ENCODE measurements at regions of chr15 and their contacts with region 1.

Region 1: GRCh38 chr15:96330450-96331145 is at the start of gene NR2F2:
- DNase-seq: peak; percentile 95
- ATAC-seq: peak; percentile 60
- H3K4me3 ChIP-seq: peak within 1 kb of the TSS; percentile 70 to 94 (median 94)
- H3K27ac ChIP-seq: peak within 1 kb of the TSS; percentile 99
- H3K4me1 ChIP-seq: peaks cover 42% of the 10 kb centered on the region
- H3K27me3 ChIP-seq: no peaks in the 10 kb centered on the region; a peak in 1 of 5 replicates
- CTCF ChIP-seq: no peak
- EP300 ChIP-seq: peak in 1 of 2 experiments; percentile 17; a peak in 1 of 4 replicates
- POLR2A ChIP-seq: peak; percentile 79 to 83
- RAD21 ChIP-seq: 0 out of 2 replicates have a peak, but pooled peaks have one; percentile 20
- total RNA-seq, gene NR2F2: 3.5 and 5.0 TPM in 2 replicates

Region 2: GRCh38 chr15:95259513-95259912 is 1071.1 kb before region 1 on chr15:
- CTCF ChIA-PET with region 1: no interaction called
- POLR2A ChIA-PET with region 1: no interaction called
- in situ Hi-C with region 1: loop called (anchors 25 kb)
- intact Hi-C with region 1: no loop called
- DNase-seq: peak; percentile 35
- ATAC-seq: peak; percentile 82
- H3K4me3 ChIP-seq: no peak overlapping the region
- H3K27ac ChIP-seq: no peak overlapping the region
- H3K4me1 ChIP-seq: no peaks in the 10 kb centered on the region
- H3K27me3 ChIP-seq: no peaks in the 10 kb centered on the region; a peak in 1 of 5 replicates
- CTCF ChIP-seq: peak; percentile 78
- EP300 ChIP-seq: no peak
- POLR2A ChIP-seq: no peak
- RAD21 ChIP-seq: 0 out of 2 replicates have a peak, but pooled peaks have one; percentile 21

Region 3: GRCh38 chr15:96053031-96053780 is 277.4 kb before region 1 on chr15:
- CTCF ChIA-PET with region 1: no interaction called
- POLR2A ChIA-PET with region 1: no interaction called
- in situ Hi-C with region 1: no loop called
- intact Hi-C with region 1: loop called (anchors 5 kb)
- DNase-seq: peak; percentile 9
- ATAC-seq: peak; percentile 80
- H3K4me3 ChIP-seq: peak overlapping the region; percentile 43 to 60 (median 45)
- H3K27ac ChIP-seq: no peak overlapping the region
- H3K4me1 ChIP-seq: peaks cover 14% of the 10 kb centered on the region
- H3K27me3 ChIP-seq: 0 out of 5 replicates have a peak, but pooled peaks cover 0 to 4% of the 10 kb centered on the region in 2 experiments
- CTCF ChIP-seq: no peak
- EP300 ChIP-seq: no peak
- POLR2A ChIP-seq: no peak
- RAD21 ChIP-seq: no peak

Region 4: GRCh38 chr15:96261575-96262034 is 69.0 kb before region 1 on chr15:
- CTCF ChIA-PET with region 1: no interaction called
- POLR2A ChIA-PET with region 1: interaction called, 13 read pairs
- in situ Hi-C with region 1: loop called (anchors 5 kb)
- intact Hi-C with region 1: loop called (anchors 2 kb)
- DNase-seq: peak; percentile 94
- ATAC-seq: peak; percentile 86
- H3K4me3 ChIP-seq: peak overlapping the region in 2 of 3 experiments; percentile 50 to 54; a peak in 4 of 6 replicates
- H3K27ac ChIP-seq: peak overlapping the region; percentile 87
- H3K4me1 ChIP-seq: peaks cover 85% of the 10 kb centered on the region
- H3K27me3 ChIP-seq: no peaks in the 10 kb centered on the region
- CTCF ChIP-seq: no peak
- EP300 ChIP-seq: peak in 1 of 2 experiments; percentile 81; a peak in 2 of 4 replicates
- POLR2A ChIP-seq: 0 out of 4 replicates have a peak, but pooled peaks of 1 of the 2 experiments have one; percentile 44
- RAD21 ChIP-seq: no peak

Region 5: DNA sequence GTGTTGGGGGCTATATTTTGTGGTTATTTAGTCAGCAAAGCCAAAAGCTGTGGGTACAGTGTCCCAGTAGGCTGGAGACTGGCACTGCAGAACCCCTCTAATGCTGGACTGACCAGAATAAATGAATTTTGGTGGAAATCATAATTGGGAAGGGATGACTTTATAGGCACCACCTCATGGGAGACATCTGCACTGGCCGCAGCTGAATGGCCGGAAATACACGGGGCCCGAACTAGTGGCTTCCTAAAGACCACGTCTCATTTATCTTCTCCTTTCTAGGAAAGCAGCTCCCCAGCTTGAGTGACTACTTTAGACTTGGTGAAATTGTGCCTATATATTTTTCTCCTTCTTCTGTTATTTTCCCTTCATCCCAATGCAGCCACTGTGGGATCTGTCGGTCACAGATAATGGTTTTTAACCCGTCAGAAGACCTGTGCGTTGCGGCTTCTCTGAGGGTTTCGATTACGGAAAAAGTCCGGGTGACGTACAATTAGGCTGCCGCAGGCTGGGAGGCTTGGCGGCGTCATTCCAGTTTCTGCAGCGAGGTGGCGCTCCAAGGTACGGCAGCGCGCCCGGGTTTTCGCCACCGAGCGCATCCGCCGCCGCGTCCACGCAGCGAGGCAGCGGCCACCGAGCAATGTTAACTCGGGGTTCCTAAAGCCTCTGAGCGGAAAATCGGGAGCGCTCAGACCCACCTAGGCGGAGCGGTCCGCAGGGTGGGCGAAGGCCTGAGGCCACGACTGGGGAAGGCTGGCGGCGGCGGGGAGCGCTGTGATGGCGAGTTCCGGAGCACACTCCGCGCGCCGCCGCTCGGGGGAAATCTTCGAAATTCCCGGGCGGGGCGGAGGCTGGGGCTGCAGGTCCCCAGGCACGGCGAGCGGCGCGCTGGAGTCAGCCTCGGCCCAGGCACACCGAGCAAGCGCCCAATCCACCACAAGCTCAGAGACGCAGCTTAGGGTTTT is 26.2 kb after region 1 on chr15:
- CTCF ChIA-PET with region 1: interaction called, 10 read pairs
- POLR2A ChIA-PET with region 1: interaction called, 23 read pairs
- in situ Hi-C with region 1: no loop called
- intact Hi-C with region 1: loop called (anchors 2 kb)
- DNase-seq: peak; percentile 54
- ATAC-seq: peak; percentile 78
- H3K4me3 ChIP-seq: peak overlapping the region; percentile 63 to 80 (median 70)
- H3K27ac ChIP-seq: no peak overlapping the region
- H3K4me1 ChIP-seq: peaks cover 26% of the 10 kb centered on the region
- H3K27me3 ChIP-seq: no peaks in the 10 kb centered on the region; a peak in 1 of 5 replicates
- CTCF ChIP-seq: peak; percentile 96
- EP300 ChIP-seq: no peak
- POLR2A ChIP-seq: no peak
- RAD21 ChIP-seq: peak; percentile 92

Region 6: DNA sequence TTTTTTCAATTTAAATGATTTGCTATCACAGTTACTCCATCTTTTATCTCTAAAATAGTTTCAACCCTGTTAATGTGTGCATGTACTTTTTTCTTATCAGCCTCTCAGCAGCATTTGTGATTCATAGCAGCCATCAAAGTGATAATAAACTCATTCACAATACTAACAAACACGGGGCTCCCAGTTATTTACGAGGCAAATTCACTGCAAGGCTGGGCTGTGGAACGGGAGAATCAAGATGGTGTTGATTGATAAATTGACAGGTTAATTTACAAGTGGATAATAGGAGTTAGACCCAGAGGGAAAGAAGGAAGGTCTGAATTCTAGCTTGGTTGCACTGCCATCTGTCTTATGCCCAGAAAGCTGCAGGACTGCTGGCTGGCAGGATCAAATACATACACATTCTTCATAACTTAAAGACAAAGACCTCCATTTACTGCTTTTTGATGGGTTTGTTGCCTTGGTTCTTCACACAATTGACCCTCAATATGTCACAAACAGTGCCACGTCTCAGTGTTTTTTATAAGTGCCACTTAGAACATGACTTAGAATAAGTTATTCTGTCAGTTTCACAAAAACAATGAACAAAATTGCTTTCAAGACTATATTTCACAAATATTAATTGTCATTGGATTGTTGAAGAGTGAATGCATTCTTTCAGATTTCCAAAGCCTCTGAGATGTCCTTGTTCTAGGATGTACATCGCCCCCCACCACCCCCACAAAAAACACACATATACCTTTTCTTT is 562.7 kb after region 1 on chr15:
- CTCF ChIA-PET with region 1: no interaction called
- POLR2A ChIA-PET with region 1: no interaction called
- in situ Hi-C with region 1: loop called (anchors 10 kb)
- intact Hi-C with region 1: no loop called
- DNase-seq: no peak
- ATAC-seq: peak; percentile 55; the same call in 2 of the 3 replicates
- H3K4me3 ChIP-seq: no peak overlapping the region
- H3K27ac ChIP-seq: no peak overlapping the region
- H3K4me1 ChIP-seq: no peaks in the 10 kb centered on the region
- H3K27me3 ChIP-seq: no peaks in the 10 kb centered on the region; a peak in 1 of 5 replicates
- CTCF ChIP-seq: peak; percentile 56
- EP300 ChIP-seq: no peak
- POLR2A ChIP-seq: no peak
- RAD21 ChIP-seq: no peak